Cardiac septum (tissue), 1 donor: ENCODE measurements at regions of chr10 and their contacts with region 1.

Region 1: DNA sequence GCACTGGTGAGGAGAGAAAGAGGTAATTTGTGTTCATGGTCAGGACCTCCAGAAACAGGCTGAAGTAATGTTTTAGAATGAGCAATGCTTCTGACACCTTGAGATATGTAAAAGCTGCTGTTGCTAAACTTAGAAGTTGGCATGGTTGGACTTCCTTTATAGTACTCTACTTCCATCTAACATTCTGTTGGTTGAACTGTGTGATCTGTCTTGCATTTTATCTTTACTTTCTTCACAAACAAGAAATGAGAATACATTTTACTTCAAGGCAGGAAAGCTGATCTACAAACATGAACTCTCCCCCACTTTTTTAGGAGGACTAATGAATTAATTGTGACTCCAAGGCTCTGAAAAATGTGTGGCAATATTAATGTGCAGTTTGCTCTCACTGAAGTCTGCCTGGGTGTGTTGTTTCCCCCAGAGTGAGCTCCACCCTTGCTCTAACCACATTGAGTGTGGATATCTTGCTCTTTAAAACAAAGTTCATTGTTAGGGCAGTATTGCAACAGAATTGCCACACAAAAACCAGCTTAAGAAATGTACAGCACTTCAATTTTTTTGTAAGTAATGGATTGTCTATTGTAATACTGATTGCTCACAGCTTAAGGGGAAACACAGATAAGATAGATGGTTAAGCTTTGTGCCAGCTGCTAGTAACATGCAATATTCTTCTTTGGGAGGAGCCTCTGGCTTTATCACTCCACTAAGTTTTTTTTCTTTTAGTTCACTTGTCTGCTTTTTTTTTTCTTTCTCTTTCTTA is 69.0 kb downstream of the ADD3 start:
- DNase-seq: no peak

Region 2: DNA sequence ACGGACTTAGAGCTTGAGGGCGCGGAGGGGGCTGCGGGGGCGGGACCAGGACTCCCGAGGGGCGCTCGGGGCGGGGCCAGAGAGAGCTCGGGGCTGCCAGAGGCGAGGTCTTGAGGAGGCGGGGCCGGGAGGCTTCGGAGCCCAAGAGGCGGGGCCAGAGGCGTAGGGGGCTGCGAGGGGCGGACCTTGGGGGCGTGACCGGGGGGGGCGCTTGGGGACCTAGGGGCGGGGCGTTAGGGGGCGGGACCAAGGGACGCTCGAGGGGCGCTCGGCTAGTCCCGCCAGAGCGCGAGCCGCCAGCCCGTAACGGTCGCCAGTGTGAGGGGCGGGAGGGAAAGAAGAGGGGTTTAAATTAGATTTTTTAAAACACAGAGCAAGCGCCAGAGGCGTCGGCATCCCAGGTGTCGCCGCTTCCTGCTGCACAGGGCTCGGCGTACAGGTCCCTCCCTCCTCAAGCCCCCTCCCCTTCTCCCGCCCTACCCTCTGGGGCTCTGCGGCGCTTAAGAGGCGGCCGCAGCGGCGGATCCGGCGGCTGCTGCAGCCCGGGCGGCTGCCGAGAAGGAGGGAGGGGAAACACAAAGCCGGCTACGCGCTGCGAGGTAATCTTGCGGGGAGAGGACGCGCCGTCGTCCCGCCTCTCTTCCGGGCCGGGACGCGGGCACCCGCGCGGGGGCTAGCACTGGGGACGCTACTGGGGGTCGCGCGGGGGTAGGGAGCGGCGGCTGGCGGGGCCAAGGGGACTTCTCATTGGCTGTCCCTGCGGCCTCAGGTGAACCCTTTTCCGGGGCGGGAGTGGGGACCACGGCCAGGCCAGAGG is 68.8 kb before region 1 on chr10 and contains the start of gene ADD3:
- intact Hi-C with region 1: loop called (anchors 2 kb)
- DNase-seq: peak; percentile 97
- total RNA-seq, gene ADD3: 77.2 TPM

Region 3: GRCh38 chr10:111146025-111146640 is 1069.4 kb after region 1 on chr10:
- intact Hi-C with region 1: no loop called
- DNase-seq: no peak